ENCODE measurements at regions of chr19 and their contacts with region 1.

Region 1: DNA sequence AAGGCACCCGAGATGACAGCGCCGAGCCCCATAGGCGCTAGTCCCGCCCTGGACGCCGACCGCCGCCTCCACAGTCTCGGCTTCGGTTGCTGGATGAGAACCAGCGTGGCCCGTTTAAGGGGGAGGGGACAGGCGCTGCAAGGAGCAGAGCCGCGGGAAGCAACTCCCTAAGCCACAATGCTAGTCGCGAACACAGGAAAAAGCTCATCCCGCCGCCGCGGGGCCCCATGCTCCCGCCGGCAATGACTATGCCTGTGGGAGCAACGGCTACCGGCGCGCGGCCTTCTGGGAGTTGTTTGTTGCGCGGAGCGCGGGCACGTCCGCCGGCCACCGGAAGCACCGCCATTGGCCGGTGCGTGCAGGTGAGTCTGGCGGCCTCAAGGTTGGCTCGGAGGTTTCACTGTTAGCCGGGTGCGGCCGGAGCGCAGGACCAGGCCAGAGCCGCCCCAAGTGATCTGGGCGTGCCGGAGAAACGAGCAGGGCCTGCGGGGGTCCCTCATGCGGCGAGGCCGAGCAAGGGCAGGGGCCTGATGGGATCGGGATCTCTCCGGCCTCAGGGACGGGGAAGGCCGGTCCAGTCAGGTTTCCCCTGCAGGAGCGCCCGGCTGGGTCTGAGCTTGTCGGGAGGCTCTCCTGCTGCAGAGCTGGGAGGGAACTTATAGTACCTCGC is at the start of gene ZNF544:
- DNase-seq: peak; percentile 76
- H3K27ac ChIP-seq: peak within 1 kb of the TSS; percentile 93
- CTCF ChIP-seq: no peak; the same call in 1 of the 2 replicates

Region 2: DNA sequence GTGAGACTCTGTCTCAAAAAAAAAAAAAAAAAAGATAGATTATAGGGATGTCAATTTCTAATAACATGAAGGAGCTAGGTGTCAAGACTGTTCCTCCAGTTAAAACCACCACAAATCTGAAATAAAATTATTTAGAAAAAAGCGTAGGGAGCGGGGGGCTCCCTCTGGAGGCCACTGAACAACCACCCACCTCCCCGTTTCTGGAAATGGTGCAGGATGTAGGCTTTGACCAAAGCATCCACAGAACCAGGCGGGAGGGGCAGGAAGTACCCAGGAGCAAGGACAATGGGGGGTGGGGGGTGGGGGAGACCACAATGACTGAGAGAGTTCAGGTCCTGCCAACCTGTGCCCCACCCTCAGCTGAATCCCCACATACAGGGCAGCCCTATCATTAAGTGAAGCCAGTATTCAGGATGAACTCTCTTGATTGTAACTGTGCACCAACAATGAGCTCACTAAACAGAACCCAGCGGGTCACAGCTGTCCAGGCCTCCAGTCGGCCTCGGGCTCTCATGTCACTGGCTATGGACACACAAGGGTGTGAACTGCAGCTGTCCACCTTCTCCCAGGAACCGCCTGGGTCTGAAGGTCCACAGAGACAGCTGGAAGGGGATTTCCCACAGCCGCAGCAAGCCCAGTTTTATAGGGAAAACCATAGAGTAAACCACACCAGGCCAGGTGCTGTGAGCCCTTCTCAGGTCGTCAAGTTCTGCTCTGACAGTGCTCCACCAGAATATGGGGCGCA is 137.3 kb before region 1 on chr19:
- CTCF ChIA-PET with region 1: interaction called, 10 read pairs
- POLR2A ChIA-PET with region 1: no interaction called
- DNase-seq: no peak
- H3K27ac ChIP-seq: no peak overlapping the region
- CTCF ChIP-seq: no peak

Region 3: GRCh38 chr19:58107778-58108545 is 120.8 kb before region 1 on chr19:
- CTCF ChIA-PET with region 1: no interaction called
- POLR2A ChIA-PET with region 1: no interaction called
- DNase-seq: no peak
- H3K27ac ChIP-seq: no peak overlapping the region
- CTCF ChIP-seq: no peak

Region 4: GRCh38 chr19:58182989-58183816 is 45.5 kb before region 1 on chr19 and contains the start of gene ZNF274:
- CTCF ChIA-PET with region 1: no interaction called
- POLR2A ChIA-PET with region 1: interaction called, 11 read pairs
- DNase-seq: peak; percentile 91
- H3K27ac ChIP-seq: peak within 1 kb of the TSS; percentile 98
- CTCF ChIP-seq: no peak

Region 5: GRCh38 chr19:58217607-58218490 is 10.9 kb before region 1 on chr19:
- CTCF ChIA-PET with region 1: no interaction called
- POLR2A ChIA-PET with region 1: no interaction called
- DNase-seq: no peak
- H3K27ac ChIP-seq: no peak overlapping the region
- CTCF ChIP-seq: no peak

Region 6: DNA sequence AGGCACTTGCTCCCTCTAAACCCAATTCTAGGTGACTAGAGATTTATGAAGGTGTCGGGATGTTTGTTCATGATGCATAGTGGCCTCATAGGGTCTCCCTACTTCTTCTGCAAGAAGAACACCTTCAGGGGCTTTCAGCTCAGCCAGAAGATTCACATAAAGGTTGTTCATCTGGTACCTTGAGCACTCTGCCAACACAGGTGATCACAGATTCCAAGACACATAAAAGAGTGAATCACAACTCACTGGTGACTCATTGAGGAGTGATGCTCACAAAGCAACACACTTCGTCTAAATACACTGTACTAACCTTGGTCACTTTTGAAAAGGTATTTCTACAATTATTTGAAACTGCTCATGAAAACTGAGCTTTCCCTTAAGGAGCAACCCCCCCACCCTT is 231.3 kb after region 1 on chr19:
- CTCF ChIA-PET with region 1: no interaction called
- POLR2A ChIA-PET with region 1: no interaction called
- DNase-seq: peak; percentile 68
- H3K27ac ChIP-seq: no peak overlapping the region
- CTCF ChIP-seq: no peak